Gastrocnemius medialis (tissue), 4 donors: ENCODE measurements at regions of chr19 and their contacts with region 1.

Region 1: DNA sequence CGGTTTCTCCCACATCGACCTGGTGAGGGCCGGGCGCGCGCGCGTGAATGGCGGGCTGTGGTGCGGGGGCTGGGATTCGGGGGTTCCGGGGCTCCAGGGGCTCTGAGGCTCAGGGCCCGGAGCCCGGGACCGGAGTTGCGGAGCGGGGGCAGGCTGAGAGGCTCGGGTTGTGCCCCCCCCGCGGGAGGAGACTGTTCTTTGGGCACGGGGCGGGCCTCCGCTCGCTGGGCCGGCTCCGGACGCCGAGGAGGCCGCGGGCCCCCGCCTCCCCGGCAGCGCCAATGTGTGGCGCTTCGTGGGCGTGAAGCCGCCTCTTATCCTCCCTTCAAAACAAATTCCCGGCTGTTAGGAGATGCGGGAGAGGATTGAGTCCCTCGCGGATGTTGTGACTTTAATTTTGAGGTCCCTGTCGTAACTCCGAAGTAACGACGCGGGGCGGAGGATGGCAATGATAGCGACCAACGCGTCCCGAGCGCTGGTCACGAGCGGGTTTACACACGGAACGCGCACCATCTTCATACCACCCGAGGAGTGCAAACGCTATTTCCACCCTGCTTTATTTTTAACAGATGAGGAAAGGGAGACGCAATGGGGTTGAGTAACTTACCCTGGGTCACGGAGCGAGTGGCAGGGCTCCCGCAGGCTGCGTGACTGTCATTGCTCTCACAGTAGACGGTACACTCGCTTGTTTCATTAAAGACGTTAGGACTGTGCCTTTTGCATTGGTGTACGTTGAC is 536 bp downstream of the UBA2 start:
- DNase-seq: peak; percentile 69 to 85
- ATAC-seq: peak; percentile 88 to 90
- H3K4me3 ChIP-seq: peak overlapping the region; percentile 84 to 98 (median 91)
- H3K27ac ChIP-seq: peak overlapping the region; percentile 97 to 98 (median 98)
- H3K4me1 ChIP-seq: peaks cover 44 to 47% of the 10 kb centered on the region in 2 donors
- H3K27me3 ChIP-seq: no peaks in the 10 kb centered on the region
- CTCF ChIP-seq: no peak
- POLR2A ChIP-seq: peak; percentile 71 to 75

Region 2: GRCh38 chr19:34253699-34254551 is 174.8 kb before region 1 on chr19:
- in situ Hi-C with region 1: no loop called
- intact Hi-C with region 1: loop called (anchors 10 kb)
- DNase-seq: peak in 1 of 2 donors; percentile 80
- ATAC-seq: peak; percentile 14
- H3K4me3 ChIP-seq: peak overlapping the region; percentile 81 to 100 (median 90)
- H3K27ac ChIP-seq: peak overlapping the region; percentile 96 to 100 (median 98)
- H3K4me1 ChIP-seq: peaks cover 30 to 34% of the 10 kb centered on the region in 2 donors
- H3K27me3 ChIP-seq: no peaks in the 10 kb centered on the region
- CTCF ChIP-seq: no peak
- POLR2A ChIP-seq: peak; percentile 92

Region 3: GRCh38 chr19:34359140-34359953 is 69.4 kb before region 1 on chr19:
- in situ Hi-C with region 1: no loop called
- intact Hi-C with region 1: loop called (anchors 1 kb)
- DNase-seq: peak; percentile 92 to 98
- ATAC-seq: peak; percentile 82 to 89
- H3K4me3 ChIP-seq: peak overlapping the region; percentile 46 to 56 (median 54)
- H3K27ac ChIP-seq: peak overlapping the region; percentile 87 to 91 (median 89)
- H3K4me1 ChIP-seq: peaks cover 7 to 11% of the 10 kb centered on the region in 2 donors
- H3K27me3 ChIP-seq: no peaks in the 10 kb centered on the region
- CTCF ChIP-seq: peak in 4 of 5 experiments; percentile 40 to 74 (median 64)
- POLR2A ChIP-seq: peak; percentile 45 to 57

Region 4: GRCh38 chr19:34375598-34375997 is 53.1 kb before region 1 on chr19:
- in situ Hi-C with region 1: no loop called
- intact Hi-C with region 1: no loop called
- DNase-seq: no peak
- ATAC-seq: no peak
- H3K4me3 ChIP-seq: no peak overlapping the region
- H3K27ac ChIP-seq: peak overlapping the region in 1 of 4 donors; percentile 99
- H3K4me1 ChIP-seq: peaks cover 12 to 13% of the 10 kb centered on the region in 2 donors
- H3K27me3 ChIP-seq: no peaks in the 10 kb centered on the region
- CTCF ChIP-seq: no peak
- POLR2A ChIP-seq: no peak

Region 5: DNA sequence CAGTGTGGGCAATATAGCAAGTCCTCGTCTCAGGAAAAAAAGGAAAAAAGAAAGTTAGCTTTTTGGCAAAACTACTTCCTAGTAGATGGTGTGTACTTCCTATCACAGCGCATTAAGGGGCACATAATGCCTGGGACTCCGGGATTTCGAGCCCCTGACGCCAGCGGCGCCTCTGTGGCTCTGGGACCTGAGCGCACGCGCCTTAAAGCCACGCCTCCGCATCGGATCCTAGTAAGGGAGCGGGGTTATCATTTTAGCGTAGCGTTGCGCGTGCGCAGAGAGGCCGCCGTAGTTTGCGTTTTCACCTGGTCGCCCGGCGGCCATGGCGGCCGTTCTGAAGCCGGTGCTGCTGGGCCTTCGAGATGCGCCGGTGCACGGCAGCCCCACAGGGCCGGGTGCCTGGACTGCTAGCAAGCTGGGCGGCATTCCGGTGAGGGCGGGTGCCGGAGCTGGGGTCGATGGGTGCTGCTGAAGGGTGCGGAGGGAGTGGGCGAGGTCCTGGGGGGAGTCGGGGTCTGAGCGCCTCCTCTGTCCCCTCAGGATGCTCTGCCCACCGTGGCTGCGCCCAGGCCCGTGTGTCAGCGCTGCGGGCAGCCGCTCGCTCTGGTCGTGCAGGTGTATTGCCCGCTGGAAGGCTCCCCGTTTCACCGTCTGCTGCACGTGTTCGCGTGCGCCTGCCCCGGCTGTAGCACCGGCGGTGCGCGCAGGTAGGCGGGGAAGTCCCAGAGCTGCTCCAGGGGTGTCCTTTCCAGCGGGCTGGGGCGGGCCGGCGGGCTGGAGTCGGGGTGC is 24.4 kb before region 1 on chr19 and contains the start of gene PDCD2L:
- in situ Hi-C with region 1: no loop called
- intact Hi-C with region 1: loop called (anchors 1 kb)
- DNase-seq: peak; percentile 86 to 92
- ATAC-seq: peak; percentile 96 to 98
- H3K4me3 ChIP-seq: peak within 1 kb of the TSS; percentile 80 to 95 (median 86)
- H3K27ac ChIP-seq: peak within 1 kb of the TSS; percentile 81 to 86 (median 86)
- H3K4me1 ChIP-seq: peaks cover 0 to 4% of the 10 kb centered on the region in 2 donors
- H3K27me3 ChIP-seq: no peaks in the 10 kb centered on the region
- CTCF ChIP-seq: no peak
- POLR2A ChIP-seq: peak; percentile 59 to 73
- total RNA-seq, gene PDCD2L: 18.1 to 49.8 (median 25.1) TPM

Region 6: DNA sequence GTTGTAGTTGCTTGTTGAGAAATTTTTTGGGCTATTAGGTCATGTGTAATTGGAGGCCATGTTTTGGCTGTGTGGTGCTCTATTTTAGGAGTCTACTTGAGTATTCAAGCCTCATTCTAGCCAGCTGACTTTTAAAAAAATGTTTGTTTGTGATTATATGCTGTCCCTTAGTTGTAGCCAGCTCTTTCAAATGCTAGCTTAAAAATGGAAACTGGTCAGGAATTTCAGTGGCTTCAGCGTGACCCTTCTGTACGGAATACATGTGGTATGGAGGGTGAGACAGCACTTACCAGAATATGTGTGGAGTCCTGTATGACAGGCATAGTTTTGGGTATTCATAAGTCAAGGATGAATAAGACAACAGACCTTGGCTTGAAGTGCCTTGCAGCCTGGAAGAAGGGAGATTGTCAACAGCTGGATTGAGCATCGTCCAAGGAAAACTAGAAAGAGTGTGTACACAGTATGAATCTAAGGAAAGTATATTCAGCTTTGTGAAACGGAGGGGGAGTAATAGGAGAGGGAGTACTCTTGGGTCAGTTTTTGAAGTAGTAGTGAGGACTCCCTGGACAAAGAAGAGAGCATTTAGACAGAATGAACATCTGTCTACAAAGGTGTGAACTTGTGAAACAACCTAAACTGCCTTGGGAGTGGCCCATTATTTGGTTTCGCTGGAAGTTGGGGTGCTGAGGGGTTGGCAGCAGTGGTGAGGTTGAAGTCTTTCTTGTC is 32.8 kb after region 1 on chr19:
- in situ Hi-C with region 1: no loop called
- intact Hi-C with region 1: loop called (anchors 1 kb)
- DNase-seq: peak; percentile 20 to 36
- ATAC-seq: peak; percentile 80 to 93
- H3K4me3 ChIP-seq: peak overlapping the region in 1 of 4 donors; percentile 12
- H3K27ac ChIP-seq: peak overlapping the region; percentile 86 to 92 (median 89)
- H3K4me1 ChIP-seq: peaks cover 51 to 54% of the 10 kb centered on the region in 2 donors
- H3K27me3 ChIP-seq: no peaks in the 10 kb centered on the region
- CTCF ChIP-seq: no peak
- POLR2A ChIP-seq: no peak